Activated CD4-positive, alpha-beta memory T cell treated with anti-CD3 and anti-CD28 coated beads for 36 hours (primary cell): ENCODE measurements at regions of chr10 and their contacts with region 1.

Region 1: DNA sequence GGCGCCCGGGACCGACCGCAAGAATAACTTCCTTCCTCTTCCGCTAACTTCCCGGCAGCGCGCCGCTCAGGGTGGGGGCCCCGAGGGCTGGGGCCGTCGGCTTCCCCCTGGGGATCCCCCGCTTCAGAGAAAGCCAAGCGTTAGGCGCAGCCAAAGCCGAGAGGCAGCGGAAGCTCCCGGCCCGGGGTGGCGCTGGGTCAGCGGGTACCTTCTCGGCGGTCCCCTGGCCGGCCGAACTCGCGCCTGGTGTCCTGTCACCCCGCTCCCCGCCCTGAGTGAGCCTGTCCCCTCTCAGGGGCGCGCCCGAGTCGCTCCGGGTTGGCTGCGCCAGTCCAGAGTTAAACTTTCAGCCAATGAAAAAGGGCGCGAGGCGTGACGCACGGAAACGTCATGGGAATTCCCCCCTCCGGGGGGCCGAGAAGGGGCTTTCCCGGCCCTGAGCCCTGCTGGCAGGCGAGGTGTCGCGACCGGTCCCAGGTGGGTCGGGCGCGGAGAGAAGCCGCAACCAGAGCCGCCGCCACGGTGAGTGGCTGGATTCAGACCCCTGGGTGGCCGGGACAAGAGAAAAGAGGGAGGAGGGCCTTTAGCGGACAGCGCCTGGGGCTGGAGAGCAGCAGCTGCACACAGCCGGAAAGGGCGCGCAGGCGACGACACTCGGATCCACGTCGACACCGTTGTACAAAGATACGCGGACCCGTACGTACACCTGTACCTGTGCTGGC is 1.3 kb upstream of the NFKB2 start:
- DNase-seq: peak; percentile 99
- H3K4me3 Mint-ChIP-seq: peak overlapping the region; percentile 94
- H3K27ac Mint-ChIP-seq: peak overlapping the region; percentile 99
- H3K4me1 Mint-ChIP-seq: peaks cover 39% of the 10 kb centered on the region
- H3K27me3 Mint-ChIP-seq: no peaks in the 10 kb centered on the region

Region 2: GRCh38 chr10:100766693-100767421 is 1627.4 kb before region 1 on chr10:
- CTCF ChIA-PET with region 1: no interaction called
- POLR2A ChIA-PET with region 1: no interaction called
- intact Hi-C with region 1: no loop called
- DNase-seq: no peak
- H3K4me3 Mint-ChIP-seq: no peak overlapping the region
- H3K27ac Mint-ChIP-seq: no peak overlapping the region
- H3K4me1 Mint-ChIP-seq: no peaks in the 10 kb centered on the region
- H3K27me3 Mint-ChIP-seq: peaks cover 40% of the 10 kb centered on the region

Region 3: GRCh38 chr10:102151774-102152544 is 242.3 kb before region 1 on chr10 and contains the start of gene NOLC1:
- CTCF ChIA-PET with region 1: interaction called, 5 read pairs
- POLR2A ChIA-PET with region 1: interaction called, 21 read pairs
- intact Hi-C with region 1: loop called (anchors 1 kb)
- DNase-seq: peak; percentile 100
- H3K4me3 Mint-ChIP-seq: peak within 1 kb of the TSS; percentile 96
- H3K27ac Mint-ChIP-seq: peak within 1 kb of the TSS; percentile 98
- H3K4me1 Mint-ChIP-seq: peaks cover 53% of the 10 kb centered on the region
- H3K27me3 Mint-ChIP-seq: no peaks in the 10 kb centered on the region
- total RNA-seq, gene NOLC1: 165 to 168 TPM

Region 4: GRCh38 chr10:102261196-102261595 is 133.0 kb before region 1 on chr10:
- CTCF ChIA-PET with region 1: no interaction called
- POLR2A ChIA-PET with region 1: no interaction called
- intact Hi-C with region 1: no loop called
- DNase-seq: no peak
- H3K4me3 Mint-ChIP-seq: no peak overlapping the region
- H3K27ac Mint-ChIP-seq: no peak overlapping the region
- H3K4me1 Mint-ChIP-seq: peaks cover 42% of the 10 kb centered on the region
- H3K27me3 Mint-ChIP-seq: no peaks in the 10 kb centered on the region

Region 5: DNA sequence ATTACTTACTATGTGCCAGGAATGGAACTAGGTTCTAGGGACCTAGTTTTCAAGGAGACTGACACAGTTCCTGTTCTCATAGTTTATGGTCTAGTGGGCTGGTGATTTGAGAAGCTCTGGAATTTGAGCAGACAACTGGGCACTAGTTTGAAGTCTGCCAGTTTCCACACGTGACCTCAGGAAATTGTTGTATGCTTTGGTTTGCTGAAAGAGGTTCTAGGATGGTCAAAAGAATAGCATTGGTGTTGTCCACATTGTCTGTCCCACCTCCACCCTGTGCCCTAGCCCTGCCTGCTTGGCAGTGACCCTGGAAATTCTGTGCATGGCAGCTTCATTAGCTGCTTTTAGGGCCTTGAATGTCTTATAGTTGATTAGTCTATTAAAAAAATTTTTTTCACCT is 120.2 kb before region 1 on chr10:
- CTCF ChIA-PET with region 1: no interaction called
- POLR2A ChIA-PET with region 1: no interaction called
- intact Hi-C with region 1: no loop called
- DNase-seq: no peak
- H3K4me3 Mint-ChIP-seq: no peak overlapping the region
- H3K27ac Mint-ChIP-seq: no peak overlapping the region
- H3K4me1 Mint-ChIP-seq: peaks cover 34% of the 10 kb centered on the region
- H3K27me3 Mint-ChIP-seq: no peaks in the 10 kb centered on the region

Region 6: GRCh38 chr10:102384053-102384452 is 10.2 kb before region 1 on chr10:
- CTCF ChIA-PET with region 1: interaction called, 20 read pairs
- POLR2A ChIA-PET with region 1: interaction called, 11 read pairs
- intact Hi-C with region 1: no loop called
- DNase-seq: peak; percentile 37
- H3K4me3 Mint-ChIP-seq: no peak overlapping the region
- H3K27ac Mint-ChIP-seq: no peak overlapping the region
- H3K4me1 Mint-ChIP-seq: peaks cover 4% of the 10 kb centered on the region
- H3K27me3 Mint-ChIP-seq: no peaks in the 10 kb centered on the region

Region 7: GRCh38 chr10:102432162-102432950 is 38.1 kb after region 1 on chr10 and contains the start of gene CUEDC2:
- CTCF ChIA-PET with region 1: interaction called, 9 read pairs
- POLR2A ChIA-PET with region 1: interaction called, 19 read pairs
- intact Hi-C with region 1: loop called (anchors 1 kb)
- DNase-seq: peak; percentile 99
- H3K4me3 Mint-ChIP-seq: peak within 1 kb of the TSS; percentile 84
- H3K27ac Mint-ChIP-seq: peak within 1 kb of the TSS; percentile 88
- H3K4me1 Mint-ChIP-seq: peaks cover 42% of the 10 kb centered on the region
- H3K27me3 Mint-ChIP-seq: no peaks in the 10 kb centered on the region
- total RNA-seq, gene CUEDC2: 68.6 to 68.9 TPM

Region 8: GRCh38 chr10:102476466-102477141 is 82.4 kb after region 1 on chr10:
- CTCF ChIA-PET with region 1: interaction called, 44 read pairs
- POLR2A ChIA-PET with region 1: interaction called, 17 read pairs
- intact Hi-C with region 1: loop called (anchors 1 kb)
- DNase-seq: no peak
- H3K4me3 Mint-ChIP-seq: no peak overlapping the region
- H3K27ac Mint-ChIP-seq: peak overlapping the region; percentile 65
- H3K4me1 Mint-ChIP-seq: peaks cover 21% of the 10 kb centered on the region
- H3K27me3 Mint-ChIP-seq: no peaks in the 10 kb centered on the region

Region 9: DNA sequence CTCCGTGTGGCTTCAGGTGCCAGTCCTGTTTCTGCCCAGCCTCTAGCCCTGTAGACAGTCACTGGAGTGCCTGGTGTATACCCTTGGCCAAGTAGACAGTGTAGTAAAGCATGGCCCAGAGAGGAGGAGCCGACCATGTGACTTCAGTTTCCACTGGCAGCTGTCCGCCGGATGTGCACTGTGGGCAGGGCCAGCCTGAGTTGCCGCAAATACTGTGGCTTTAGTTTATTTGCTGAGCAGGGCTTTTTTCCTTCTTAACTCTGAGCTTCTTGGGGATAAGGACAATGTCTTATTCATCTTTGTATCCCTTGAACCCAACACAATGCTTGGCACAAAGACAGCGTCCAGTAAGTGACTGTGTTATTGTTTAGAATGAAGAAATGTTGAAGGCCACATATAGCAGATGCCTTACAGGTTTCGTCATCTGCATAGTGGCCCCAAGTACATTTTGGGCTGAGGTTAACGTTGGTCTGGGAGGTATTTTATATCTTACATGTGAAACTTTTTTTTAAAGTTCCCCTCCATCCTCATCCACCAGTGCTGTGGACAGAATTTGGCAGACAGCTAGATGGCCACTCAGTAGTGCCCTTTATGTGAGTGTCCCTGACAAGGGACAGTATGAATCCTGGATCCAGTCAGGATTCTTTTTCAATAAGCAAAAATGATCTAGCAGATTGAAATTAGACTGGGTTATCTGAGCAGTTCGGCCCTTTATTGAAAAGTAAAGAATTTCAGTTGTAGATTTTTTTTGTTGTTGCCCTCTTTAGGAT is 402.4 kb after region 1 on chr10:
- CTCF ChIA-PET with region 1: no interaction called
- POLR2A ChIA-PET with region 1: no interaction called
- intact Hi-C with region 1: no loop called
- DNase-seq: peak; percentile 78
- H3K4me3 Mint-ChIP-seq: no peak overlapping the region
- H3K27ac Mint-ChIP-seq: peak overlapping the region; percentile 49
- H3K4me1 Mint-ChIP-seq: peaks cover 32% of the 10 kb centered on the region
- H3K27me3 Mint-ChIP-seq: no peaks in the 10 kb centered on the region